Activated T-helper 1 cell treated with anti-CD3 and anti-CD28 coated beads, Interleukin-12 subunit alpha, Interleukin-12 subunit beta, Interleukin-2, Interleukin-4 antibody, amounts not matched to agents 30 ng/mL and 10 ng/mL and 1 ng/mL, durations not matched to agents 14 hours and 24 hours and 36 hours (primary cell): ENCODE measurements at regions of chr5 and their contacts with region 1.

Region 1: DNA sequence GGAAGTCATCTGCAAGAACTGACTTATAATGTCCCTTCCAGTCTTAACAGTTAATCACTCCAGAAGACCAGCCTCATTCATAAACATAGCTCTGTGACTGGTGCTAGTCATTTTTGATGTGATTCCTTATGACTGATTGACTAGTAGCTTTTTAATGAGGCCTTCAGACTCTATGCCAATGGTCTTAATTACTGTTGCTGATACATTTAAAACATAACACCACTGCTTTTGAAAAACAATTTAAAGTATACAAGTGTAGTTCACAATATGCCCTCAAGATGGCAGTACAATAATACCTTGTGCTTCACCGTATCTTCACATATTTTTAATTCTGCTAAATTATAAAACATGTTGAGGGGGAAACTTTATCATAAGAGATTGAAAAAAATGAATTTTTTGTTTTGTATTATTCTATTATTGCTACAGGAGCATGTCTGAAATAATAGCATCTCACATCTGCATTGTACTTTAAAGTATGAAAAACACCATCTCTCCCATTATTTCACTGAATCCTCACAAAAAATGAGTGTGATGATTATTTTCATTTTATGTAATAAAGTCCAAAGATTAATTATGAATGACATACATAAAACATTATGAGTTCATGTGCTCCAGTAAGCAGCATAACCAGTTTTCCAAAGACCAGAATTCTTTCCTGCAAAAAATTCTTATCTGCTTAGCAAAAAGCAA is 55.2 kb upstream of the SHISAL2B start:
- DNase-seq: no peak
- H3K4me3 Mint-ChIP-seq: no peak overlapping the region
- H3K27ac Mint-ChIP-seq: no peak overlapping the region
- H3K4me1 Mint-ChIP-seq: peaks cover 7% of the 10 kb centered on the region
- H3K27me3 Mint-ChIP-seq: peaks cover 20% of the 10 kb centered on the region

Region 2: GRCh38 chr5:64451551-64451950 is 183.6 kb before region 1 on chr5:
- intact Hi-C with region 1: no loop called
- DNase-seq: no peak
- H3K4me3 Mint-ChIP-seq: no peak overlapping the region
- H3K27ac Mint-ChIP-seq: no peak overlapping the region
- H3K4me1 Mint-ChIP-seq: no peaks in the 10 kb centered on the region
- H3K27me3 Mint-ChIP-seq: no peaks in the 10 kb centered on the region

Region 3: GRCh38 chr5:64768358-64769312 is 133.5 kb after region 1 on chr5 and contains the starts of genes CWC27 and SREK1IP1:
- intact Hi-C with region 1: loop called (anchors 1 kb)
- DNase-seq: peak; percentile 79
- H3K4me3 Mint-ChIP-seq: peak within 1 kb of the TSS; percentile 98
- H3K27ac Mint-ChIP-seq: peak within 1 kb of the TSS; percentile 96
- H3K4me1 Mint-ChIP-seq: peaks cover 51% of the 10 kb centered on the region
- H3K27me3 Mint-ChIP-seq: no peaks in the 10 kb centered on the region
- total RNA-seq, gene CWC27: 29.1 and 33.5 TPM in 2 replicates
- total RNA-seq, gene SREK1IP1: 29.4 and 31.7 TPM in 2 replicates

Region 4: GRCh38 chr5:64784451-64785025 is 149.4 kb after region 1 on chr5:
- intact Hi-C with region 1: loop called (anchors 1 kb)
- DNase-seq: peak; percentile 49
- H3K4me3 Mint-ChIP-seq: no peak overlapping the region
- H3K27ac Mint-ChIP-seq: no peak overlapping the region
- H3K4me1 Mint-ChIP-seq: peaks cover 5% of the 10 kb centered on the region
- H3K27me3 Mint-ChIP-seq: no peaks in the 10 kb centered on the region

Region 5: GRCh38 chr5:64980176-64980575 is 345.0 kb after region 1 on chr5:
- intact Hi-C with region 1: loop called (anchors 10 kb)
- DNase-seq: no peak
- H3K4me3 Mint-ChIP-seq: no peak overlapping the region
- H3K27ac Mint-ChIP-seq: no peak overlapping the region
- H3K4me1 Mint-ChIP-seq: peaks cover 6% of the 10 kb centered on the region
- H3K27me3 Mint-ChIP-seq: no peaks in the 10 kb centered on the region